ENCODE measurements at regions of chr17 and their contacts with region 1.

Region 1: DNA sequence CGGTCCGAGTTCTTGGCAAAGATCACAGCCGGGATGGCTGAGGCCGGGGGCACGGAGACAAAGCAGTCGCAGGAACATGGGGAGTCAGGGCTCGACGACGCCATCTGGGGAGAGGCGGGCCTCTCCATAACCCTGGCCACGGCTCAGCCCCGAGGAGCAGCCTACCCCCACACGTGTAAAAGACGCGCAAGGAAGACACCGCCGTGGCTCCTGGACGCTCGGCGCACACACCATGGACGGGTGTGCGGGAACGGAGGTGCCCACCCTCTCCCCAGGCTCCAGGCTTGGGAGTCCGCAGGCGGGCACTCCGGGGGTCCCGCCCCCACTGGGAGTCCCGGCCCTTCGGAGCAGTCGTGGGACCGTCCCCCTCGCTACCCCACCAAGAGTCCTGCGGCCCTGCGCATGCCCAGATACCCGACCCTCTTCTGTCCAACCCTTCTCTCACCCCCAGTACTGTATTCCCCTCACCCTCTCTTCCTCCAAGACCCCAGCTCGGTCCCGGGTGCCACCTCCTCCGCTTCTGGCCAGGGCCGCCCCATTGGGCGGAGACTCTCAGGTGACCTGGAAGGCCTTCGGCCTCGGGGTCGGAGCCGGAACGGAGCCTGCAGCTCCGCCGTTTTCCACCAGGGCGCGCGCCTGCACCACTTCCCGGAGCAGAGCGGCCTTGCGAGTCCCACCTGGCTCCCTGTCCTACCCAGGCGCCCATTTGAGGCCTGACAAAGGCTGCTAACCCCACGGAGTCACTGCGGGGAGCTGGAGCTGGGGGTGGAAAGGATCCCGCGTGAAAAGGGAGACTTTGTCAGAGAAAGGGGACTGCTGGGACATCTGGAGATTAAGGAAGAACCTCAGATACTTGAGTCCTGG is at the start of gene SCRN2:
- DNase-seq: peak; percentile 52
- ATAC-seq: peak; percentile 91
- H3K4me3 ChIP-seq: peak within 1 kb of the TSS; percentile 84 to 90
- H3K27ac ChIP-seq: peak within 1 kb of the TSS; percentile 76
- H3K4me1 ChIP-seq: peaks cover 17% of the 10 kb centered on the region
- H3K27me3 ChIP-seq: no peaks in the 10 kb centered on the region
- CTCF ChIP-seq: peak; percentile 99
- total RNA-seq, gene SCRN2: 34.9 TPM

Region 2: DNA sequence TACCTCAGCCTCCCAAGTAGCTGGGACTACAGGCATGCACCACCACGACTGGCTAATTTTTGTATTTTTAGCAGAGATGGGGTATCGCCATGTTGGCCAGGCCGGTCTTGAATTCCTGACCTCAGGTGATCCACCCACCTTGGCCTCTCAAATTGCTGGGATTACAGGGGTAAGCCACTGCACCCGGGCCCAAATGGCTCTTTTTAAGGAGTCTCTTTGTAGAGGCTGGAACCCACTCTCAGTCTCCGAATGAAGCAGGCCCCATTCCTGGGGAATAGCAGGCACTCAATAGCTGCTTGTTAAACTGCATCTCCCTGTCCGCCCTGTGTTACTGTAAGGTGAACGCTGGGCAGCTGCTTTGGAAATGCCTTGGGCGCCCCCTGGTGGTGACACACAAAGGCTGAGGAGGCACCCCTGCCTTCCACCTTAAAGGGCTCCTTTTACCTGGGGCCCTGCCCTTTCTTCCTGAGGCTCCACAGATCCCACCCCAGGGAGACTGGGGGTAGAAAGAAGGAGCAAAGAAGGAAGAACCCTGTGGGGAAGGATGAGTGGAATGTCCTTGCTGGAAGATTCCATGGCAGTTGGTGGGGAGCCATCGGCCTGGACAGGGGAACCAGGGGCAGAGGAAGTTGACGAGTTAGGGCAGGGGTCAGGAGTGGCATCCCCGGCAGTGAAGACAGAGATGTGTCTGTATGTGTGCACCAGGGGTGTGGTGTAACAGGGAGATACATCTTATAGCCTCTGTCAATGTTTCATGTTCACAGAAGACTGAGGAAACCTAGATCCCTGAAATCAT is 49.0 kb after region 1 on chr17:
- CTCF ChIA-PET with region 1: interaction called, 78 read pairs
- POLR2A ChIA-PET with region 1: interaction called, 14 read pairs
- in situ Hi-C with region 1: no loop called
- intact Hi-C with region 1: loop called (anchors 1 kb)
- DNase-seq: no peak
- ATAC-seq: peak; percentile 98
- H3K4me3 ChIP-seq: no peak overlapping the region
- H3K27ac ChIP-seq: no peak overlapping the region
- H3K4me1 ChIP-seq: peaks cover 7% of the 10 kb centered on the region; the same call in 1 of the 2 replicates
- H3K27me3 ChIP-seq: no peaks in the 10 kb centered on the region
- CTCF ChIP-seq: peak; percentile 97

Region 3: GRCh38 chr17:47895856-47896671 is 55.1 kb after region 1 on chr17 and contains the start of gene SP2:
- CTCF ChIA-PET with region 1: interaction called, 78 read pairs
- POLR2A ChIA-PET with region 1: interaction called, 14 read pairs
- in situ Hi-C with region 1: no loop called
- intact Hi-C with region 1: no loop called
- DNase-seq: peak; percentile 100
- ATAC-seq: peak; percentile 96
- H3K4me3 ChIP-seq: peak within 1 kb of the TSS; percentile 88 to 98
- H3K27ac ChIP-seq: peak within 1 kb of the TSS; percentile 98
- H3K4me1 ChIP-seq: peaks cover 9% of the 10 kb centered on the region; the same call in 1 of the 2 replicates
- H3K27me3 ChIP-seq: no peaks in the 10 kb centered on the region
- CTCF ChIP-seq: no peak
- total RNA-seq, gene SP2: 25.6 TPM

Region 4: GRCh38 chr17:47970704-47971463 is 129.9 kb after region 1 on chr17 and contains the start of gene CDK5RAP3:
- CTCF ChIA-PET with region 1: interaction called, 5 read pairs
- POLR2A ChIA-PET with region 1: interaction called, 4 read pairs
- in situ Hi-C with region 1: no loop called
- intact Hi-C with region 1: loop called (anchors 5 kb)
- DNase-seq: peak; percentile 90
- ATAC-seq: peak; percentile 97
- H3K4me3 ChIP-seq: peak within 1 kb of the TSS; percentile 84 to 90
- H3K27ac ChIP-seq: peak within 1 kb of the TSS; percentile 87
- H3K4me1 ChIP-seq: peaks cover 20% of the 10 kb centered on the region
- H3K27me3 ChIP-seq: no peaks in the 10 kb centered on the region
- CTCF ChIP-seq: peak; percentile 100
- total RNA-seq, gene CDK5RAP3: 193 TPM

Region 5: DNA sequence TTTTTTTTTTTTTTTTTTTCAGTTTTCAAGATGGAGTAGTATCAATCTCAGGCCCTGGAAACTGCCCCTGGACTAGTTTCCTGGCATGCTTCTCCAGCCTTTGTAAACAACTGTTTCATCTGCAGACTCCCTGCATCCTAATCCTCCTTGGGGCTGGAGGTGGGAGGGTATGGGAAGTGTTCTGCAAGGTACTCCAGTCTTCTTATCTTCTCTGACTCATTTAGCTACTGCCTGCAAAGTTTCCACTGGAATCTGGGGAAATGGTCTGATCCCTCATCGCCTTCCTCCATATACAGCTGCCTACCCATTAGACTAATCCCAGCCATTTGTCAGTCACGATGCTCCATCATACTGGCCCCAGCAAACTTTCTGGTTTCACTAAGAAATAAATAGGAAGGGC is 175.1 kb after region 1 on chr17:
- CTCF ChIA-PET with region 1: interaction called, 9 read pairs
- POLR2A ChIA-PET with region 1: no interaction called
- in situ Hi-C with region 1: no loop called
- intact Hi-C with region 1: loop called (anchors 5 kb)
- DNase-seq: no peak
- ATAC-seq: peak; percentile 47
- H3K4me3 ChIP-seq: no peak overlapping the region
- H3K27ac ChIP-seq: no peak overlapping the region
- H3K4me1 ChIP-seq: peaks cover 13% of the 10 kb centered on the region; the same call in 1 of the 2 replicates
- H3K27me3 ChIP-seq: no peaks in the 10 kb centered on the region
- CTCF ChIP-seq: no peak

Measured in Panc1 (cell line).